Activated CD8-positive, alpha-beta T cell treated with anti-CD3 and anti-CD28 coated beads for 36 hours (primary cell): ENCODE measurements at regions of chr22 and their contacts with region 1.

Region 1: GRCh38 chr22:22877523-22878210 is 9.9 kb upstream of the IGLL5 start:
- DNase-seq: peak; percentile 77
- ATAC-seq: no peak
- H3K4me3 Mint-ChIP-seq: no peak overlapping the region
- H3K27ac Mint-ChIP-seq: no peak overlapping the region
- H3K4me1 Mint-ChIP-seq: peaks cover 2% of the 10 kb centered on the region
- H3K27me3 Mint-ChIP-seq: no peaks in the 10 kb centered on the region
- CTCF ChIP-seq: peak; percentile 82

Region 2: DNA sequence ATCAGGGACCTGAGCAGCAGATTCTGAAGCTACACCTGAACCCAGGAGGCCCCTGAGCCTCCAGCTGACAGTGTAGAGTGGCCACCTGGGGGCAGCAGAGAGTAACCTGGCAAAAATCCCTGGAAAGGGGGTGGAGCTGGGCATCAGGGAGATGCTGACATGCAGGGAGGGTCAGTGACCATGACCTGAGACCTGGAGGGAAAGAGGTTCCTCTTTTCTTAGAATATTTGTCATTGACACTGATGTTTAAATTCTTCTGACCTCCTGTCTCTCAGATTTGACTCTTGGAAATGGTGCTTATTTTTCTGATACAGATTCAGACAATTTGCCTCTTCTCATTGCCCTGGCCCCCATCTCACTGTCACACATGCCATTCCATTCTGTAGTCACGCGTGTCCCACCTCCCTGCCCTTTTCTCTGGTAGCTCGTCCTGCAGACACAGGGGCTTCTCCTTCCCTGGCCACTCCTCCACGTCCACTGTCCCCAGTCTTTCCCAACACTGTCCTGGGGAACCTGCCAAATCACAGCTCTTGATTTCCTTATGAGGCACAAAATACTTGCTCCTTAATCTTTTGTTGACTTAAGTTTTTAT is 107.3 kb before region 1 on chr22:
- CTCF ChIA-PET with region 1: interaction called, 35 read pairs
- POLR2A ChIA-PET with region 1: no interaction called
- intact Hi-C with region 1: no loop called
- DNase-seq: peak; percentile 65
- ATAC-seq: peak; percentile 62
- H3K4me3 Mint-ChIP-seq: no peak overlapping the region
- H3K27ac Mint-ChIP-seq: no peak overlapping the region
- H3K4me1 Mint-ChIP-seq: peaks cover 4% of the 10 kb centered on the region
- H3K27me3 Mint-ChIP-seq: no peaks in the 10 kb centered on the region
- CTCF ChIP-seq: peak; percentile 80

Region 3: DNA sequence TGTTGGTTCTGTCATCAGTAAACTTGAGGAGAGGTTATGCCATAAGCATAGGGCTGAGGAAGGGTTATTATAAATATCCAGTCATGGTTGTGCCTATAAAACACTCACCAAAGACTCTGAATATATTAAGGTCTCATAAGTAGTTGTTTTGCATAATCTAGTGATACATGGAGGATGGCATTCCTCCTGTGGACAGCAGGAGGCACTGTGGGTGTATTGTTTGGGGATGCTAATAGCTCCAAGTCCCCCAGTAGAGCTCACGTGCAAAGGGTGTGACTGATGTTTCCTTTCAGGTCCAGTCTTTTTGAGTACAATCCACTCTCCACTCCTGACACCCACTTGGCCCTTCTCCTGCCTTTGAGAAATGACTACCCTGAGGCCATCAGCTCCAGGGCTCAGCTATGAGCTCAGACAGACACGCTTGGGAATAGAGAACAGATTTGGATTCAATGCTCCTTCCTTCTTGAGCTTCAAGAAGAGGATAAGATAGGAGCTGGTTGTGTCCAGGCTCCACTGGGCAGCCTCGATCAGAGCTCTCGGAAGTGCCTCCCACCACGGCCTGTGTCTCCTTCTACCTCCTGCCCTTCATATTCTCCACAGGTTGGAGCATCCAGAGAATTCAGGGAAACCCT is 75.2 kb before region 1 on chr22:
- CTCF ChIA-PET with region 1: interaction called, 20 read pairs
- POLR2A ChIA-PET with region 1: no interaction called
- intact Hi-C with region 1: loop called (anchors 5 kb)
- DNase-seq: peak; percentile 66
- ATAC-seq: peak; percentile 64
- H3K4me3 Mint-ChIP-seq: no peak overlapping the region
- H3K27ac Mint-ChIP-seq: no peak overlapping the region
- H3K4me1 Mint-ChIP-seq: peaks cover 28% of the 10 kb centered on the region
- H3K27me3 Mint-ChIP-seq: no peaks in the 10 kb centered on the region
- CTCF ChIP-seq: peak; percentile 80

Region 4: GRCh38 chr22:22810018-22810427 is 67.6 kb before region 1 on chr22:
- CTCF ChIA-PET with region 1: interaction called, 59 read pairs
- POLR2A ChIA-PET with region 1: no interaction called
- intact Hi-C with region 1: no loop called
- DNase-seq: peak; percentile 72
- ATAC-seq: peak; percentile 78
- H3K4me3 Mint-ChIP-seq: no peak overlapping the region
- H3K27ac Mint-ChIP-seq: no peak overlapping the region
- H3K4me1 Mint-ChIP-seq: peaks cover 25% of the 10 kb centered on the region
- H3K27me3 Mint-ChIP-seq: no peaks in the 10 kb centered on the region
- CTCF ChIP-seq: peak; percentile 72

Region 5: DNA sequence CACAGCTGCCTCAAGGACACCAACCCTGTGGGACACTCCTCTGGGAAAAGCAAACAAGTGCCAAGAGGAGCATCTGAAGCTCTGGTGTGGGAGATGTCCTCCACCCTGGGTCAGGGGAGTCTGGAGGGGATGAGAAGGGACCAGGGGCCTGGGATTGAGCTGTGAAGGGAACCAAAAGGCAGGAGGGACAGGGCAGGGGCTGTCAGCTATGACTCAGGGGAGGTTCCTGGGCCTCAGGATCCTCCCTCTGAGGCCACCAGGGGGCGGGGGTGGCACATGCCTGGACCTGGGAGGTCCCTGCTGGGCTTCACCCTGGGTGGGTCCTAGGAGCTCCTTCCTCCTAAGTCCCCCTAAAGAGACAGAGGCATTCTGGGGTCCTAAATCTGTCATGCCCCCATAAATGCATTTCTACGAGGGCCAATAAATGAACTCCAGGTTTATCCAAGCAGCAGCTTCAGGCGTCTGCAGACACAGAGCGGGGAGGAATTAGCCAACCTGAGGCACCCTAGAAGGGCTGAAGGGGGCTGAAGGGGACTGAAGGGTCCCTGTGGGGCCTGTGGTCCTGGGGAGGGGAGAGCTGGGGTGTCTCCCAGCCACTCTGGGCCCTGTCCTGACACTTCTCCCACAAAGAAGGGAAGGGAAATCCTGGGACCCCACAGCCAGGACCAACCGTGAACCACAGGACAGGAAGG is 21.9 kb before region 1 on chr22:
- CTCF ChIA-PET with region 1: interaction called, 122 read pairs
- POLR2A ChIA-PET with region 1: no interaction called
- intact Hi-C with region 1: no loop called
- DNase-seq: peak; percentile 68
- ATAC-seq: peak; percentile 91
- H3K4me3 Mint-ChIP-seq: no peak overlapping the region
- H3K27ac Mint-ChIP-seq: no peak overlapping the region
- H3K4me1 Mint-ChIP-seq: peaks cover 5% of the 10 kb centered on the region
- H3K27me3 Mint-ChIP-seq: peaks cover 2% of the 10 kb centered on the region
- CTCF ChIP-seq: peak; percentile 55

Region 6: DNA sequence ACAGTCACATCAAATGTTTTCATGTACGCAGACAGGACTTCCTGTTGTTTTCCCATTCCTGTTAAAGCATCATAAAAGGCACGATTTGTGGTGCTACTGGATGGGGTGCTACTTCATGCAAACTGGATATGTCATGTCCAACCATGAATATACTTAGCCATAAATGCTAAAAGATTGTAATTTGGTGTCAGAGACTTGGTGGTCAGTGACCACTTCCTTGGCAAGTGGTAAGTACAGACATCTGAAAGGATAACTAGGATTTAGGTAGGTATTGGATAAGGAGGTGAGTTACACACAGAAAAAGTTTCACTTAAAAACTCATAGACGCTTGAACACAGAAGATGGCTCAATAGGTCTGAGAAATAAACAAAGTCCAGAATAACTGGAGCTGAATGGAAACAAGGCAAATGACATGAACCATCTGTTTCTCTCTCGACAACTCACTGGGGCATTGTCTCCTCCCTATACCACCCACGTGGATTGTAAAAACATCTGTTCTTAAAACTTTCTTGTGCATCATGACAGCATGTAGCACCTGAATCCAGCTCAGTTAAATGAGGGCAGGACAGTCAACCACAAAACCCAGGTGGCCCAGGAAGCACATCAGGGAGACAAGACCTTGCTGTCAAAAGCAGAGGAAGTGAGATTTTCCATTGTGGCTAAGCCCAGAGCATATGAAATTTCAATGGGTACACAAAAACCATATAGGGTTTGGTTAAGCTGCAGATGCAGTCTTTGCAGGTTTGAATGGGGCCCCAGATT is 12.2 kb before region 1 on chr22:
- CTCF ChIA-PET with region 1: interaction called, 29 read pairs
- POLR2A ChIA-PET with region 1: no interaction called
- intact Hi-C with region 1: no loop called
- DNase-seq: peak; percentile 77
- ATAC-seq: peak; percentile 82
- H3K4me3 Mint-ChIP-seq: no peak overlapping the region
- H3K27ac Mint-ChIP-seq: peak overlapping the region; percentile 35
- H3K4me1 Mint-ChIP-seq: peaks cover 41% of the 10 kb centered on the region
- H3K27me3 Mint-ChIP-seq: no peaks in the 10 kb centered on the region
- CTCF ChIP-seq: no peak